ENCODE measurements at regions of chr22 and their contacts with region 1.

Region 1: DNA sequence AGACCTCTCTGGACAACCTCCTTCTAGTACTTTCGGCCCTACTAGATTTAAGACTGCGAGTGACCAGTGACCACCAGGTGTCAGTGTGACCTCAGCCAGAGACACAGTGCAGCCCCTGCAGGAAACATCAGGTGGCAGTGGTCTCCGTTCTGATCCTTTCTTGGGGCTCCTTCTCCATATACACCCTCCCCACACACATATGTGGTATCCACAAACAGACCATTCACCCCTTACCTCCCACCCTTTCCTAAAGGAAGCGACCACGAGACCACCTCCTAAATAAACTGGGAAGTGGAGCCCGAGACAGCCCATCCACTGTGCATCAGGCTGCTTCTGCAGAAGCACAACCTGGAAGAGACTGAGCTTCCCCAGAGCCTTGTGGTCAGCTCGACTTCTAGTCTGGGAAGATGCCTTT is 38.5 kb upstream of the CYP2D6 start:
- DNase-seq: peak; percentile 70
- ATAC-seq: peak; percentile 79

Region 2: DNA sequence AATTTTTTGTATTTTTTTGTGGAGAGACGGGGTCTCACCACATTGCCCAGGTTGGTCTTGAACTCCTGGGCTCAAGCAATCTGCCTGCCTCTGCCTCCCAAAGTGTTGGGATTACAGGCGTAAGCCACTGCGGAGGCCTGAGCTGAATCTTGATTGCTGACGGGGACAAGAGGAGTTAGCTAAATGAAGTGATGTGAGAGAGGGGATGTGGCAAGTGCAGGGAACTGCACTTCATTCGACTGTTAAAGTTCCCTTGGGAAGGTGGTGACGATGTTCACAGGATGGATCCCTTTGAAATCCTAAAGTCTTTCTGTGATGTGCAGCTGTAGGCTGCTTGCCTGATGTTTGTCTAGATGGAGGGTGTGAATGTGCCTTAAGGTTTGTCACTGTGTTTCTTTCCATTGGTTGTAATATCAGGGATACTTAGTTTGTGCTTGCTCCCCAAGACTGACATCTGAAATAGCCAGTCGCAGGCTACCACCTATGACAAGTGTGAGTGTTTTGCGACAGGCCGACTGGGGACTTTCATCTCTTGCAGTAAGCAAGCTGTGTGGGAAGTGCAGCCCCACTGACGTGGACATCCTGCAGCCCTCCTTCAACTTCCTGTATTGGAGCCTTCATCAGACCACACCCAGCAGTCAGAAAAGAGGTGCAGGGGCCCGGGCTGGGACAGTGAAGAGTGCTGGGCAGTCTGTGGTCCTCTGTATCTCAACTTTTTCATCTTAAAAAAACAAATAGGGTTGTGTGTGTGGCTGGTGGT is 388.1 kb before region 1 on chr22:
- intact Hi-C with region 1: no loop called
- DNase-seq: peak; percentile 57
- ATAC-seq: peak; percentile 83

Region 3: GRCh38 chr22:42114721-42115120 is 54.3 kb before region 1 on chr22:
- intact Hi-C with region 1: no loop called
- DNase-seq: no peak
- ATAC-seq: no peak

Region 4: GRCh38 chr22:42437488-42438292 is 268.6 kb after region 1 on chr22:
- intact Hi-C with region 1: loop called (anchors 5 kb)
- DNase-seq: peak; percentile 83
- ATAC-seq: peak; percentile 87

Measured in left ventricle myocardium superior (tissue), 1 donor.